Mammary epithelial cell (primary cell): ENCODE measurements at regions of chr7 and their contacts with region 1.

Region 1: DNA sequence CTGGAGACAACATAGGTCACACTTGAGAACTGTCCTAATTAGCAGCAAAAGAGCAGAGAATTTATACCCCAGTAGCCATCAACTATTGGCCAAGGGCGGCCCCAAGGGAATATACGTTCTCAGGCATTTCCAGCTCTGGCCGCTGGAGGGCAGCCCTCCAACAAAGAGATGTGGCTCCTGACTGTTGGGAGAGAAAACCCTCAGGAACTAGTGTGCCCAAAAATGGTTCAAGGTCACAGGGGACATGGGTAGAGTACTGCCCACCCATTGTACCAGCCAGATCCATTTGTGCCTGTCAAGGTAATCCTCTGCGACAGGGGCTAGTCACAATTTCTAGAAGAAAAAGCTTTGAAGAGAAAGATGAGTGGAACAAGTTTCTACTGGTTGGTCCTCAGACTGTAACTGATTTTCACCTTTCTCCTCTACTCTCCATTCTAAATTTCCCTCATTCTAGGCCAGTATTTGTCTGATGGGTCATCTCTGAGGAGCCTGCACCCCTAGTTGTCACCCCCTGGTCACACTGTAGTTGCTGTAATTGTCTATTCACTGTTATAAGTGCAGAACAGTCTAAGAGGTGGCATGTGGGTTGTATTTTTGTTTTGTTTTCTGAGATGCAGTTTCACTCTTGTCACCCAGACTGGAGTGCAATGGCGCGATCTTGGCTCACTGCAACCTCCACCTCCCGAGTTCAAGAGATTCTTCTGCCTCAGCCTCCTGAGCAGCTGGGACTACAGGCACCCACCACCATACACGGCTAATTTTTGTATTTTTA is 14.7 kb upstream of the C7orf33 start:
- DNase-seq: peak; percentile 42
- H3K4me3 ChIP-seq: no peak overlapping the region
- H3K27ac ChIP-seq: no peak overlapping the region
- H3K4me1 ChIP-seq: no peaks in the 10 kb centered on the region
- H3K27me3 ChIP-seq: no peaks in the 10 kb centered on the region
- CTCF ChIP-seq: peak; percentile 88 to 89

Region 2: GRCh38 chr7:148684289-148684830 is 108.5 kb after region 1 on chr7:
- CTCF ChIA-PET with region 1: no interaction called
- dilution Hi-C with region 1: loop called (anchors 5 kb)
- in situ Hi-C with region 1: no loop called
- intact Hi-C with region 1: no loop called
- DNase-seq: no peak
- H3K4me3 ChIP-seq: no peak overlapping the region
- H3K27ac ChIP-seq: no peak overlapping the region
- H3K4me1 ChIP-seq: no peaks in the 10 kb centered on the region
- H3K27me3 ChIP-seq: peaks cover 2% of the 10 kb centered on the region
- CTCF ChIP-seq: no peak

Region 3: GRCh38 chr7:148698397-148699023 is 122.7 kb after region 1 on chr7 and contains the start of gene CUL1:
- CTCF ChIA-PET with region 1: no interaction called
- dilution Hi-C with region 1: no loop called
- in situ Hi-C with region 1: no loop called
- intact Hi-C with region 1: loop called (anchors 1 kb)
- DNase-seq: peak; percentile 79
- H3K4me3 ChIP-seq: peak within 1 kb of the TSS; percentile 49 to 85 (median 79)
- H3K27ac ChIP-seq: peak within 1 kb of the TSS; percentile 89
- H3K4me1 ChIP-seq: peaks cover 48% of the 10 kb centered on the region
- H3K27me3 ChIP-seq: no peaks in the 10 kb centered on the region
- CTCF ChIP-seq: no peak
- total RNA-seq, gene CUL1: 53.5 to 54.9 TPM

Region 4: GRCh38 chr7:148711191-148712102 is 135.6 kb after region 1 on chr7:
- CTCF ChIA-PET with region 1: interaction called, 11 read pairs
- dilution Hi-C with region 1: no loop called
- in situ Hi-C with region 1: no loop called
- intact Hi-C with region 1: no loop called
- DNase-seq: no peak
- H3K4me3 ChIP-seq: no peak overlapping the region
- H3K27ac ChIP-seq: no peak overlapping the region
- H3K4me1 ChIP-seq: peaks cover 7% of the 10 kb centered on the region
- H3K27me3 ChIP-seq: no peaks in the 10 kb centered on the region
- CTCF ChIP-seq: no peak

Region 5: DNA sequence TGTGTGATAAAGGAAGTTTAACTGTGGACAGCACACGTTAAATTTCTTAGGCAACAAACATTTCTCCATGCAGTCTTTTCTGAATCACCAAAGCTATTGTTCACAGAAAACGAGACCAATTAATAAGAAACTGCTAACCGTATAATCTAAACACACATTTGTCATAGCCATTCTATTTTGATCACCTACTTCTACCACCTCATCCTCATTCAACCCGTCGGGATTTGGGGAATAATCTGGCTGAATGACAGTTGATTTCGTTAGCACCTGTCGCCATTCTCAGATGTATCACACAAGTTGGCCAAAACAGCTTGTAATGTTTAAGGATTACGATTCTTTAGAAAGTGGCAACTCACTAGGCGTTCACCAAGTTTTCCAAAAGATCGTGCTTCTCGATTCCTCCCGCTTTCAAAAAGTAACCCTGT is 307.0 kb after region 1 on chr7:
- CTCF ChIA-PET with region 1: no interaction called
- dilution Hi-C with region 1: no loop called
- in situ Hi-C with region 1: no loop called
- intact Hi-C with region 1: no loop called
- DNase-seq: peak; percentile 29
- H3K4me3 ChIP-seq: peak overlapping the region; percentile 79 to 87 (median 87)
- H3K27ac ChIP-seq: peak overlapping the region; percentile 75
- H3K4me1 ChIP-seq: peaks cover 8% of the 10 kb centered on the region
- H3K27me3 ChIP-seq: no peaks in the 10 kb centered on the region
- CTCF ChIP-seq: no peak

Region 6: GRCh38 chr7:149004405-149005240 is 428.8 kb after region 1 on chr7:
- CTCF ChIA-PET with region 1: no interaction called
- dilution Hi-C with region 1: no loop called
- in situ Hi-C with region 1: no loop called
- intact Hi-C with region 1: no loop called
- DNase-seq: no peak
- H3K4me3 ChIP-seq: no peak overlapping the region
- H3K27ac ChIP-seq: no peak overlapping the region
- H3K4me1 ChIP-seq: no peaks in the 10 kb centered on the region
- H3K27me3 ChIP-seq: no peaks in the 10 kb centered on the region
- CTCF ChIP-seq: no peak